ENCODE measurements at regions of chr7 and their contacts with region 1.

Region 1: GRCh38 chr7:78134256-78134655 is 335.7 kb downstream of the PHTF2 start:
- DNase-seq: peak in 1 of 2 experiments; percentile 37
- H3K4me3 ChIP-seq: no peak overlapping the region
- H3K4me3 Mint-ChIP-seq: no peak overlapping the region
- H3K27ac Mint-ChIP-seq: no peak overlapping the region
- H3K4me1 ChIP-seq: no peaks in the 10 kb centered on the region
- H3K4me1 Mint-ChIP-seq: no peaks in the 10 kb centered on the region
- H3K27me3 ChIP-seq: no peaks in the 10 kb centered on the region
- H3K27me3 Mint-ChIP-seq: peaks cover 5% of the 10 kb centered on the region
- CTCF ChIP-seq: peak; percentile 41 to 63

Region 2: GRCh38 chr7:78226059-78226719 is 91.9 kb after region 1 on chr7:
- CTCF ChIA-PET with region 1: no interaction called
- POLR2A ChIA-PET with region 1: no interaction called
- intact Hi-C with region 1: loop called (anchors 2 kb)
- DNase-seq: peak in 1 of 2 experiments; percentile 58
- H3K4me3 ChIP-seq: no peak overlapping the region
- H3K4me3 Mint-ChIP-seq: no peak overlapping the region
- H3K27ac Mint-ChIP-seq: no peak overlapping the region
- H3K4me1 ChIP-seq: no peaks in the 10 kb centered on the region
- H3K4me1 Mint-ChIP-seq: no peaks in the 10 kb centered on the region
- H3K27me3 ChIP-seq: no peaks in the 10 kb centered on the region
- H3K27me3 Mint-ChIP-seq: peaks cover 10% of the 10 kb centered on the region
- CTCF ChIP-seq: peak; percentile 29 to 41

Region 3: GRCh38 chr7:78434281-78434680 is 300.0 kb after region 1 on chr7:
- CTCF ChIA-PET with region 1: no interaction called
- POLR2A ChIA-PET with region 1: no interaction called
- intact Hi-C with region 1: loop called (anchors 1 kb)
- DNase-seq: peak in 1 of 2 experiments; percentile 16
- H3K4me3 ChIP-seq: no peak overlapping the region
- H3K4me3 Mint-ChIP-seq: no peak overlapping the region
- H3K27ac Mint-ChIP-seq: no peak overlapping the region
- H3K4me1 ChIP-seq: no peaks in the 10 kb centered on the region
- H3K4me1 Mint-ChIP-seq: peaks cover 3% of the 10 kb centered on the region
- H3K27me3 ChIP-seq: no peaks in the 10 kb centered on the region
- H3K27me3 Mint-ChIP-seq: peaks cover 2% of the 10 kb centered on the region
- CTCF ChIP-seq: peak; percentile 13 to 54